Activated T-helper 1 cell treated with anti-CD3 and anti-CD28 coated beads, Interleukin-12 subunit alpha, Interleukin-12 subunit beta, Interleukin-2, Interleukin-4 antibody, amounts not matched to agents 30 ng/mL and 10 ng/mL and 1 ng/mL, durations not matched to agents 14 hours and 24 hours and 36 hours (primary cell): ENCODE measurements at regions of chr14 and their contacts with region 1.

Region 1: GRCh38 chr14:69611201-69612011 is at the start of gene SUSD6:
- DNase-seq: peak; percentile 84
- H3K4me3 Mint-ChIP-seq: peak within 1 kb of the TSS; percentile 98
- H3K27ac Mint-ChIP-seq: peak within 1 kb of the TSS; percentile 93
- H3K4me1 Mint-ChIP-seq: peaks cover 61% of the 10 kb centered on the region
- H3K27me3 Mint-ChIP-seq: no peaks in the 10 kb centered on the region
- total RNA-seq, gene SUSD6: 91.3 and 94.3 TPM in 2 replicates

Region 2: GRCh38 chr14:69153131-69153872 is 458.1 kb before region 1 on chr14:
- intact Hi-C with region 1: loop called (anchors 10 kb)
- DNase-seq: peak; percentile 90
- H3K4me3 Mint-ChIP-seq: peak overlapping the region; percentile 90
- H3K27ac Mint-ChIP-seq: peak overlapping the region; percentile 92
- H3K4me1 Mint-ChIP-seq: peaks cover 33% of the 10 kb centered on the region
- H3K27me3 Mint-ChIP-seq: peaks cover 39% of the 10 kb centered on the region

Region 3: DNA sequence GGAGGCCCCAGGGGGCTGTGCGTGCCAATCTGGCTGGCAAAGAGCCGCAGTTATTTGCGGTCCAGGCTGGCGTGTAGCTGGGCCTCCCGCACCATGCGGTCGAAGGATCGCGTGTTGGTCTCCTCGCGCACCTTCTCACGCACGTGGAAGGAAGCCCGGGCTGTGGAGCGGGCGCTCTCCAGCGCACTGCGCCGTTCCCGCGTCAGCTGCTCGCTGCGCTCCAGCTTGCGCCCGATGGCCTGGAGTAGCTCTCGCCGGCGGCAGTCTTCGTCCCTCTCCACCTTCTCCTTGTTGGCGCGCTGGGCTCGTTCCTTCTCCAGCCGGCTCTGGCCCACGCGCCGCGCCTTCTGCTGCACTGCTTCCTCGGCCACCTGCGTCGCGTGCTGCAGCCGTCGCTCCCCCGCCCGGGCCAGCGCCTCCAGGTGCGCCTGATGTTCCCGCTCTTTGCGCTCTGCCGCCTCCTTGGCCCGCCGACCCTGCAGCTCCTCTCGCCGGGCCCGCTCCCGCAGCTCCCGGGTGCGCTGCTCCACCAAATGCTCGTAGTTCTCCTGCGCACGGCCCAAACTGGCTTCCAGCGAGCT is 39.9 kb before region 1 on chr14:
- intact Hi-C with region 1: no loop called
- DNase-seq: no peak
- H3K4me3 Mint-ChIP-seq: no peak overlapping the region
- H3K27ac Mint-ChIP-seq: no peak overlapping the region
- H3K4me1 Mint-ChIP-seq: peaks cover 10% of the 10 kb centered on the region
- H3K27me3 Mint-ChIP-seq: peaks cover 58% of the 10 kb centered on the region

Region 4: GRCh38 chr14:69593018-69593677 is 18.3 kb before region 1 on chr14:
- intact Hi-C with region 1: no loop called
- DNase-seq: no peak
- H3K4me3 Mint-ChIP-seq: no peak overlapping the region
- H3K27ac Mint-ChIP-seq: no peak overlapping the region
- H3K4me1 Mint-ChIP-seq: peaks cover 7% of the 10 kb centered on the region
- H3K27me3 Mint-ChIP-seq: peaks cover 8% of the 10 kb centered on the region

Region 5: DNA sequence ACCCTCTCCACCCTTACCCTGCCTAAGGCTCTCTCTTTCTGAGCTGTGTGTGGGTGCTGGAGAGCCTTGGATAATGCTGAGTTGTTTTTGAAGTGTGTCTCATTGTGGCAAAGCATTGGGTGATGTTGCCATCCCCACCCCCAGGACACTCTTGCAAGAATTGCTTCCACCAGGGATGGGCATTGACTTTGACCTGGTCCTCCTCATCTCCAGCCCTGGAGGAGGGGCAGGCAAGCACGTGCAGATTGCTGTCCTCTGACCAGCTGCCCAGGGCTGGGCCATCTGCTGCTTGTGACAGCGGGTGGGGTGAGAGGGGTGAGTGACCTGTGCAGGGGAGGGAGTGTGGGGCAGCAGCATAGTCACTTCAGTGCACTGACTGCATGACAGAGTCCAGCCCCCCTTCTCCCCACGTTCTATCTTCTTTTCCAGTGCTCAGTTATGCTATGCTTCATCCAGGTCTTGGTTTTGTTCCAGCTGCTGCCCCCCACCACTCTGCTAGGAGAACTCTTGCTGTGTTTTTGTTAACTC is 26.2 kb after region 1 on chr14:
- intact Hi-C with region 1: loop called (anchors 1 kb)
- DNase-seq: no peak
- H3K4me3 Mint-ChIP-seq: peak overlapping the region; percentile 52
- H3K27ac Mint-ChIP-seq: peak overlapping the region; percentile 96
- H3K4me1 Mint-ChIP-seq: peaks cover 76% of the 10 kb centered on the region
- H3K27me3 Mint-ChIP-seq: no peaks in the 10 kb centered on the region

Region 6: DNA sequence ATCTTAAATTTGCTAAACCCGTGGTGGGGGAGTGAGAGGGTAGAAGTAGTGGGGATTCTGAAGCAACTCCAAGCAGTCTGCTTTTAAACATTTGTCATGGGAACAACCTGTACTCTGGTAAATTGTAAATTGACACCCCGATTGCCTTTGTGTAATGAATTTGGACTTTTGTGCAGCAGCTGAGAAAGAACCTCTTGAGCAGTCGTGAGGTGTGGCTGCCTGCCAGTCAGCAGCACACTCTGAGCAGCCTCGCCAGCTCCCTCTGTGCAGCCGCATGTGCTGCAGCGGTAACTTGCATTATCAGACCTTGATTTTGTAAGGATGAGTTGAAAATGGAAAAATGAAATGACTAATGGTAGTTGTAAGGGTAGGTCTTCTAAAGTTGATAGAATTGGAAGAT is 74.3 kb after region 1 on chr14:
- intact Hi-C with region 1: loop called (anchors 1 kb)
- DNase-seq: peak; percentile 32
- H3K4me3 Mint-ChIP-seq: peak overlapping the region; percentile 76
- H3K27ac Mint-ChIP-seq: peak overlapping the region; percentile 94
- H3K4me1 Mint-ChIP-seq: peaks cover 90% of the 10 kb centered on the region
- H3K27me3 Mint-ChIP-seq: no peaks in the 10 kb centered on the region

Region 7: GRCh38 chr14:69726761-69727511 is 115.5 kb after region 1 on chr14:
- intact Hi-C with region 1: loop called (anchors 2 kb)
- DNase-seq: peak; percentile 76
- H3K4me3 Mint-ChIP-seq: peak overlapping the region; percentile 72
- H3K27ac Mint-ChIP-seq: peak overlapping the region; percentile 74
- H3K4me1 Mint-ChIP-seq: peaks cover 38% of the 10 kb centered on the region
- H3K27me3 Mint-ChIP-seq: no peaks in the 10 kb centered on the region

Region 8: DNA sequence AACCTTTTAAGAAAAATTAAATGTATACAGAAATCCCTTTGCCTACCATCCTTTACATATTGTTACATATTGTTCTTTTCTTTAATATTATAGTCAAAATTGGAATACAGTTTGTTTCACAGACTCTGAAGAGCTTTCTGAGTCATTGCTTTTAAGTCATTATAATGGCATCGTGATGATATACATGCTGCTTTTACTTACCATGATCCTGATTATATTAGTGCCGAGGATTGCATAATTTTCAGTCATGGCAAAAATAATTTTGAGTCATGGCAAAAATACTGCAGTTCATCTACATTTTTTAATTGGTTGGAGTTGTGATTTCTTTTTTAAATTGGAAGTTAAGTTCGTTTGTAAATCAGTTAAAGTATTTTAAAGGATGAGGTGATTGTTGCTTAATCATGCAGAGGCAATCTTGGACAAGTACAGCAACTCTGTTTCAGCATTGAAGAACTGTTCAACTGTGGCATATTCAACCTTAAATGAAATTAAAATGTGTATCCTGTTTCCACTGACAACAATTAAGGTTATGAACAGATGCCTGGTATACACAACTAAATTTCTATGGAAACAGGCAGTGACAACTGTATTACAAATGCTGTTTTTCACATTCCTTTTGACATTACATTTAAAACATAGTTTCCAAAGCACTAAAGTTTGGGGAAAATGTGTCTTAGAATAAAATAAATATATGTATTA is 1438.2 kb after region 1 on chr14:
- intact Hi-C with region 1: no loop called
- DNase-seq: no peak
- H3K4me3 Mint-ChIP-seq: no peak overlapping the region
- H3K27ac Mint-ChIP-seq: no peak overlapping the region
- H3K4me1 Mint-ChIP-seq: no peaks in the 10 kb centered on the region
- H3K27me3 Mint-ChIP-seq: no peaks in the 10 kb centered on the region